ENCODE measurements at regions of chr6 and their contacts with region 1.

Region 1: GRCh38 chr6:41970436-41970846 is 28.8 kb upstream of the CCND3 start:
- DNase-seq: peak in 3 of 9 experiments; percentile 16 to 49 (median 23)
- ATAC-seq: peak; percentile 48
- H3K4me3 ChIP-seq: no peak overlapping the region
- H3K4me3 Mint-ChIP-seq: peak overlapping the region; percentile 26
- H3K27ac ChIP-seq: peak overlapping the region; percentile 3 to 52
- H3K27ac Mint-ChIP-seq: peak overlapping the region; percentile 90
- H3K4me1 ChIP-seq: peaks cover 79% of the 10 kb centered on the region
- H3K4me1 Mint-ChIP-seq: peaks cover 80% of the 10 kb centered on the region
- H3K27me3 ChIP-seq: no peaks in the 10 kb centered on the region
- H3K27me3 Mint-ChIP-seq: no peaks in the 10 kb centered on the region
- CTCF ChIP-seq: no peak

Region 2: DNA sequence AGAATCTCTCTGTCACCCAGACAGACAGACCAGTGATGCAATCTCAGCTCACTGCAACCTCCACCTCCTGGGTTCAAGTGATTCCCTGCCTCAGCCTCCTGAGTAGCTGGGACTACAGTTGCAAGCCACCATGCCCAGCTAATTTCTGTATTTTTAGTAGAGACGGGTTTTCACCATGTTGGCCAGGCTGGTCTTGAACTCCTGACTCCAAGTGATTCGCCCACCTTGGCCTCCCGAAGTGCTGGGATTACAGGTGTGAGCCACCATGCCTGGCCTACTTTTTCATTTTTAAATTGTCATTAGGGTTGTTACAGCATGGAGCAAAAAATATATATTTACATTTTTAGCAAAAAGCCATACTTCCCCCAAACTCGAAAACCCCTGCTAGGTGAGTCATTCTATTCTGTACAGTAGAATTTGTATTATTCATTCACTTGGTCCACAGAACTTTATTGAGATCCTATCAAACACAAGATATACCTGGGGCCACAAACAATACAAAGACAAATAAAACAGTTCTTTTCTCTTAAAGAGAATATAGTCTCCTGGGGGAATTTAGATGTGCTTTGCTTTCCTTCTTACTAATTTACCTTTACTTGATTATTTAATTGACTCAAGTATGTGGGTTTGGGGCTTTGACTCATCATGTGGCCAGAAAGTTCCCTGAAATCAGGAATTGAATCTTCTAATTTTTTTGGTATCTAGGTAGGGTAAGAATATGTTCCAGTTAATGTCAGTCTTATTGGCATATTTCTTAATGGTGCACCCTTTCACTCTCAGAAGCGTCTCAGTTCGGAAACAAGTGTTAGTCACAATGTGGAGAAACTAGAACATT is 12.2 kb before region 1 on chr6:
- CTCF ChIA-PET with region 1: no interaction called
- POLR2A ChIA-PET with region 1: interaction called, 3 read pairs
- intact Hi-C with region 1: loop called in 1 of 2 experiments (anchors 2 kb)
- DNase-seq: no peak
- ATAC-seq: no peak
- H3K4me3 ChIP-seq: no peak overlapping the region
- H3K4me3 Mint-ChIP-seq: no peak overlapping the region
- H3K27ac ChIP-seq: no peak overlapping the region
- H3K27ac Mint-ChIP-seq: peak overlapping the region; percentile 89
- H3K4me1 ChIP-seq: peaks cover 40% of the 10 kb centered on the region
- H3K4me1 Mint-ChIP-seq: peaks cover 67% of the 10 kb centered on the region
- H3K27me3 ChIP-seq: no peaks in the 10 kb centered on the region
- H3K27me3 Mint-ChIP-seq: no peaks in the 10 kb centered on the region
- CTCF ChIP-seq: no peak

Region 3: DNA sequence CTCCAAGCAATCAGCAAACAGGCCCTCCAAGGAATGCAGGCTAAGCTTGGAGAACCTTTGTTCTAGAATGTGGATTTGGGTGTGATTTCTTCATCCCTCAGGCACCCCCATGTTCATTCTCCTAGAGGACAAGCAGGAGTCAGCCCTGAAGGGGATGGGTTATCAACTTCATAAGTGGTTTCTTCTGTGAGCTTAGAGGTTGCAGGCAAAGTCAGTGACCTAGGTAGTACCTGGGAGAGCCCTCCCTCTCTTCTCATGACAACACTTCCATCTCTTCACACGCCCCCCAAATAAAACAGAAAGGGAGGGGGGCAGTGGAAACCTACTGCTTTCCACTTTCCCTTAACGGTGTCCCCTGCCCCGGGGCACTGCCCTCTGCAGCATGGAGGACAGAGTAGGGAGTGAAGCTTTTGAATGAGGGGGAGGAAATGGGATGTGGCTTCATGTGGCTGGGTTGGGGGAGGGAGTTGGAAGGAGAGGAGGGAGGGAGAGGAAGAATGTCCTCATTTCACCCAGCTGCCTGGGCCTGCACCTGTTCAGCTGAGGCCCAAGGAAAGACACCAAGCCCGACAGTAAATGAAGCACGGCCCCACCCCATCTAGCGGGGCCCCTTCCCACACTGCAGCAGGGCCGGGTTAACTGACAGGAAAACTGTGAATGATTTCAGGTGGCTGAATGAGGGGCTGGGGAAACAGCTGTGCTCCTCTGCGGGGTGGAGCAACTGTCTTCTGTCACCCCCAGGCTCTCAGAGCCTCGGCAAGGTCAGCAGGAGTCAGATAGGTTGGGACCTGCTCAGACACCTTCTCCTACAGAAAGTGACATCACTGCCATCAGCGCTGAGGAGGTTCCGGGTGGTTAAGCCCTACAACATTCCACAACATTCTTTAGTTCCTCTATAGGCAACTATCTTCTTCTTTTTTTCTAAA is 39.8 kb after region 1 on chr6:
- CTCF ChIA-PET with region 1: no interaction called
- POLR2A ChIA-PET with region 1: interaction called, 3 read pairs
- intact Hi-C with region 1: loop called in 1 of 2 experiments (anchors 5 kb)
- DNase-seq: peak in 2 of 9 experiments; percentile 19 to 42
- ATAC-seq: peak; percentile 71
- H3K4me3 ChIP-seq: no peak overlapping the region
- H3K4me3 Mint-ChIP-seq: peak overlapping the region; percentile 61
- H3K27ac ChIP-seq: peak overlapping the region; percentile 24 to 65
- H3K27ac Mint-ChIP-seq: peak overlapping the region; percentile 97
- H3K4me1 ChIP-seq: peaks cover 79% of the 10 kb centered on the region
- H3K4me1 Mint-ChIP-seq: peaks cover 79% of the 10 kb centered on the region
- H3K27me3 ChIP-seq: no peaks in the 10 kb centered on the region
- H3K27me3 Mint-ChIP-seq: no peaks in the 10 kb centered on the region
- CTCF ChIP-seq: no peak

Region 4: GRCh38 chr6:43045371-43045930 is 1075.0 kb after region 1 on chr6:
- CTCF ChIA-PET with region 1: no interaction called
- POLR2A ChIA-PET with region 1: no interaction called
- intact Hi-C with region 1: no loop called
- DNase-seq: no peak
- ATAC-seq: no peak
- H3K4me3 ChIP-seq: no peak overlapping the region
- H3K4me3 Mint-ChIP-seq: no peak overlapping the region
- H3K27ac ChIP-seq: no peak overlapping the region
- H3K27ac Mint-ChIP-seq: no peak overlapping the region
- H3K4me1 ChIP-seq: no peaks in the 10 kb centered on the region
- H3K4me1 Mint-ChIP-seq: peaks cover under 1% of the 10 kb centered on the region
- H3K27me3 ChIP-seq: no peaks in the 10 kb centered on the region
- H3K27me3 Mint-ChIP-seq: no peaks in the 10 kb centered on the region
- CTCF ChIP-seq: no peak